ENCODE measurements at regions of chr15 and their contacts with region 1.

Region 1: GRCh38 chr15:68017191-68017590 is 36.9 kb upstream of the PIAS1 start:
- DNase-seq: no peak

Region 2: GRCh38 chr15:69394556-69395282 is 1377.5 kb after region 1 on chr15:
- intact Hi-C with region 1: loop called in 1 of 2 experiments (anchors 10 kb)
- DNase-seq: peak; percentile 95

Measured in posterior vena cava (tissue), 2 donors.